Tibial artery (tissue), 4 donors: ENCODE measurements at regions of chr11 and their contacts with region 1.

Region 1: GRCh38 chr11:102254045-102254444 is 63.2 kb upstream of the BIRC3 start:
- DNase-seq: no peak
- H3K4me3 ChIP-seq: no peak overlapping the region
- H3K27ac ChIP-seq: no peak overlapping the region
- H3K4me1 ChIP-seq: no peaks in the 10 kb centered on the region
- H3K27me3 ChIP-seq: no peaks in the 10 kb centered on the region
- CTCF ChIP-seq: no peak

Region 2: DNA sequence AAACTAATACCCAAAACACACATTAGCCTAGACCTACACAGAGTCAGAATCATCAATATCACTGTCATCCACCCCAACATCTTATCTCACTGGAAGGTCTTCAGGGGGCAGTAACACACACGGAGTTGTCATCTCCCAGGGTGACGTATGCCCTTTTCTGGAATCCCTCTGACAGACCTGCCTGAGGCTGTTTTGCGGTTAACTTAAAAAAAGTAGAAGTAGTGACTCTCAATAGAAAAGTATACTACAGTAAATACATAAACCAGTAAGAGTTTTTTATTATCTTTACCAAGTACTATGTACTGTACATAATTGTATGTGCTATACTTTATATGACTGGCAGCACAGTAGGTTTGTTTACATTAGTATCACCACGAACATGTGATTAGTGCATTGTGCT is 1204.9 kb before region 1 on chr11:
- intact Hi-C with region 1: loop called (anchors 10 kb)
- DNase-seq: no peak
- H3K4me3 ChIP-seq: no peak overlapping the region
- H3K27ac ChIP-seq: no peak overlapping the region
- H3K4me1 ChIP-seq: no peaks in the 10 kb centered on the region
- H3K27me3 ChIP-seq: no peaks in the 10 kb centered on the region
- CTCF ChIP-seq: no peak

Region 3: GRCh38 chr11:101617735-101618332 is 636.2 kb before region 1 on chr11:
- intact Hi-C with region 1: no loop called
- DNase-seq: no peak
- H3K4me3 ChIP-seq: no peak overlapping the region
- H3K27ac ChIP-seq: no peak overlapping the region
- H3K4me1 ChIP-seq: no peaks in the 10 kb centered on the region
- H3K27me3 ChIP-seq: no peaks in the 10 kb centered on the region
- CTCF ChIP-seq: no peak